Common myeloid progenitor, CD34-positive (primary cell): ENCODE measurements at regions of chr17 and their contacts with region 1.

Region 1: GRCh38 chr17:19338031-19338990 is 24.2 kb downstream of the B9D1 start:
- DNase-seq: peak; percentile 78 to 90 (median 85)
- H3K4me3 ChIP-seq: no peak overlapping the region
- H3K27ac ChIP-seq: no peak overlapping the region
- H3K4me1 ChIP-seq: no peaks in the 10 kb centered on the region
- H3K27me3 ChIP-seq: peaks cover 0 to 79% (median 28%) of the 10 kb centered on the region in 5 experiments

Region 2: GRCh38 chr17:19311421-19312215 is 26.7 kb before region 1 on chr17:
- CTCF ChIA-PET with region 1: interaction called, 13 read pairs
- POLR2A ChIA-PET with region 1: interaction called, 5 read pairs
- DNase-seq: peak in 1 of 3 donors; percentile 26
- H3K4me3 ChIP-seq: no peak overlapping the region
- H3K27ac ChIP-seq: no peak overlapping the region
- H3K4me1 ChIP-seq: peaks cover 2 to 8% (median 3%) of the 10 kb centered on the region in 4 experiments
- H3K27me3 ChIP-seq: peaks cover 0 to 19% (median 18%) of the 10 kb centered on the region in 5 experiments

Region 3: DNA sequence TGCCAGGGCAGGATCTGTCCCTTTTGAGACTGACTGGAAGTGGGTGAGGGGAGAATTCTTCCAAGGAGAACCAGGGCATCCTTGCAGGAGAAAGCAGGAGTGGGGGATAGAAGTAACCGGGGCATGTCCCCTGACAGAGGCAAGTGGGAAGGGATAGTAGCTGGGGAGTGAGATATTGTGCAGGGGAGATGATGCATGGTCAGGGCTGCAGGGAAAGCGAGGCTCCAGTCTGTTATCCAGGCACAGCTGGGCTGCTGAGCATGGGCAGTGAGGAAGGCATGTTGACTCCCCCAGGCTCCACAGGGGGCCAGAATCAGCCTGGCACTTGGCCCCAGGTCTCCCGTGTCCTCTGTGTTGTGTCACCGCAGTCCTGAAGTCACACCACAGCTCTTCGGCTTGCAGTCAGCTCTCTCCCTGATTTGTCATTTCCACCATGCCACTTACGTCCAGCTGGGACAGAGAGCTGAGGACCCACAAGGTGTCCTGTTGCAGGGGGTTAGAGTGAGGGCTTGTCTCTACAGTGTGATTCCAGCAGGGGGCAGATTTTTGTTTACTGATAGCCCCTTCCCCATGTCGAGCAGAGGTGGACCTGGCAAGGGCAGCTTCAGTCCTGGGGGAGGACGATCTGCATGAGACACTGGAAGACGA is 16.7 kb before region 1 on chr17:
- CTCF ChIA-PET with region 1: interaction called, 14 read pairs
- POLR2A ChIA-PET with region 1: no interaction called
- DNase-seq: no peak
- H3K4me3 ChIP-seq: no peak overlapping the region
- H3K27ac ChIP-seq: no peak overlapping the region
- H3K4me1 ChIP-seq: no peaks in the 10 kb centered on the region
- H3K27me3 ChIP-seq: peaks cover 0 to 41% (median 15%) of the 10 kb centered on the region in 5 experiments